ENCODE measurements at regions of chr7 and their contacts with region 1.

Region 1: GRCh38 chr7:80060218-80060806 is 74.3 kb upstream of the GNAI1 start:
- DNase-seq: peak in 1 of 2 donors; percentile 32
- ATAC-seq: no peak
- H3K4me3 ChIP-seq: no peak overlapping the region
- H3K4me3 Mint-ChIP-seq: no peak overlapping the region
- H3K27ac ChIP-seq: no peak overlapping the region
- H3K27ac Mint-ChIP-seq: no peak overlapping the region
- H3K4me1 ChIP-seq: no peaks in the 10 kb centered on the region
- H3K4me1 Mint-ChIP-seq: no peaks in the 10 kb centered on the region
- H3K27me3 ChIP-seq: no peaks in the 10 kb centered on the region
- H3K27me3 Mint-ChIP-seq: no peaks in the 10 kb centered on the region
- CTCF ChIP-seq: no peak

Region 2: DNA sequence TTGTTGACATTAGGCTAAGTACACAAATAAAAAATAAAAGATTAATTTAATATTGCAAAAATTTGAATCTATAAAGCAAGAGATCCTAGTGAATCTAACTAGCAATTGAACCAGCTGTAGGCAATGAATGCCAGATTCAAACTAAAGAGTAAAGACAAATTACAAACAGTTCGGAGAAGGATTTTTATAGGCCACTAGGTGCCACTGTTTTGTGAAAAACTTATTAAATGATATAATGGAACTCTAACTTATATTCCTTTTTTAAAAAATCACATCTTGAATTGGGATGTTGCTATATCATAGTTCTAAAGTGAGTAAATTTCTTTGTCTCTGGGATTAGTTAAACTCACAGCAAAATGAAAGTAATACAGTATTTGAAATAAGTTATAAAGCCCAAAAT is 35.2 kb after region 1 on chr7:
- intact Hi-C with region 1: no loop called
- DNase-seq: peak in 1 of 2 donors; percentile 19
- ATAC-seq: no peak
- H3K4me3 ChIP-seq: no peak overlapping the region
- H3K4me3 Mint-ChIP-seq: no peak overlapping the region
- H3K27ac ChIP-seq: no peak overlapping the region
- H3K27ac Mint-ChIP-seq: no peak overlapping the region
- H3K4me1 ChIP-seq: no peaks in the 10 kb centered on the region
- H3K4me1 Mint-ChIP-seq: no peaks in the 10 kb centered on the region
- H3K27me3 ChIP-seq: no peaks in the 10 kb centered on the region
- H3K27me3 Mint-ChIP-seq: no peaks in the 10 kb centered on the region
- CTCF ChIP-seq: no peak

Region 3: DNA sequence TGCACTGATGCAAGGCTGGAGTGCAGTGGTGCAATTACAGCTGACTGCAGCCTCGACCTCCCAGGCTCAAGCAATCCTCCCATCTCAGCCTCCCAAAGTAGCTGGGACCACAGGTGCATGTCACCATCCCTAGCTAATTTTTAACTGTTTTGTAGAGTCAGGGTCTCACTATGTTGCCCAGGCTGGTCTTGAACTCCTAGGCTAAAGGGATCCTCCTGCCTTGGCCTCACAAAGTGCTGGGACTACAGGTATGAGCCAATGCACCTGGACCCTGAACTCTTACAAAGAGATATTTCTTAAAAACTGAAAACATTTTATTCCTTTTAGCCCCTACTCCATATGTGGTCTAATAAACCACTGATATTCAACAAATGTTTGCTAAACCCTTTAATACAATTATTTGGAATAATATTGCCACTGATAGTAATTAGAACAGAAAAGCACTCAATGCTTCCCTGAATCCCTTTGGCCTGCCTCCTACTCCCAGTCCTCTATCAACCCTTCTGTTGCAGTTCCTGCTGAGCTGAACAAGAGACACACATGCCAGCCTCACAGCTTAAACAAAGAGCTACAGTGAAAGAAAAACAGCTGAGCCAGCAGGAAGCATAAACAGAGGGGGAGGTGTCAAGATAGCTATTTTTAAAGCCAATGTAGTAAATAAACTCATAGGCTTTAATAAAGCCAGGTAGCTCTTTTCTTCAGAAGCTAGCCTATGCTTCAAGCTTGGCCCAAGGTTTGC is 67.3 kb after region 1 on chr7:
- intact Hi-C with region 1: loop called (anchors 10 kb)
- DNase-seq: no peak
- ATAC-seq: no peak
- H3K4me3 ChIP-seq: no peak overlapping the region
- H3K4me3 Mint-ChIP-seq: no peak overlapping the region
- H3K27ac ChIP-seq: no peak overlapping the region
- H3K27ac Mint-ChIP-seq: no peak overlapping the region
- H3K4me1 ChIP-seq: no peaks in the 10 kb centered on the region
- H3K4me1 Mint-ChIP-seq: peaks cover 0 to 9% of the 10 kb centered on the region in 2 donors
- H3K27me3 ChIP-seq: no peaks in the 10 kb centered on the region
- H3K27me3 Mint-ChIP-seq: peaks cover 7 to 9% of the 10 kb centered on the region in 2 donors
- CTCF ChIP-seq: no peak

Region 4: DNA sequence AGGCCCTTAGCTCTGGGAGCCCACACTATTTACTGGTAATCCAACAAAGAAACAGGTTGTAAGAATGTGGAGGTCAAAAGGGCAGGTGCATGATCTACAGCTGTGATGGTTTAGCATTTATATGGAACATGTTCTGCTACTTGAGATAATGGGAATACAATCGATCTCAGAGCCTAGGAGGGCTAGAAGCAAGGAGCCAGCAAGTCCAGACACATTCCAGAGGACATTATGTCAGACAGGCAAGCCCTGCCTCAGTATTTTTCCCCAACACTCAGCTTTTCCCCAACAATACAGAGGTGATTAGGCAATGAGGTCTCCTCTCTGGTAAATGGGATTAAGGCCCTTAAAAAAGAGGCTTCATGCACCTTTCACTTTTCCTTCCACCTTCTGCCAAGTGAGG is 473.0 kb after region 1 on chr7:
- intact Hi-C with region 1: no loop called
- DNase-seq: no peak
- ATAC-seq: no peak
- H3K4me3 ChIP-seq: no peak overlapping the region
- H3K4me3 Mint-ChIP-seq: no peak overlapping the region
- H3K27ac ChIP-seq: no peak overlapping the region
- H3K27ac Mint-ChIP-seq: no peak overlapping the region
- H3K4me1 ChIP-seq: peaks cover 5% of the 10 kb centered on the region
- H3K4me1 Mint-ChIP-seq: no peaks in the 10 kb centered on the region
- H3K27me3 ChIP-seq: no peaks in the 10 kb centered on the region
- H3K27me3 Mint-ChIP-seq: no peaks in the 10 kb centered on the region
- CTCF ChIP-seq: no peak